Sciatic nerve (tissue), 2 donors: ENCODE measurements at regions of chr7 and their contacts with region 1.

Region 1: DNA sequence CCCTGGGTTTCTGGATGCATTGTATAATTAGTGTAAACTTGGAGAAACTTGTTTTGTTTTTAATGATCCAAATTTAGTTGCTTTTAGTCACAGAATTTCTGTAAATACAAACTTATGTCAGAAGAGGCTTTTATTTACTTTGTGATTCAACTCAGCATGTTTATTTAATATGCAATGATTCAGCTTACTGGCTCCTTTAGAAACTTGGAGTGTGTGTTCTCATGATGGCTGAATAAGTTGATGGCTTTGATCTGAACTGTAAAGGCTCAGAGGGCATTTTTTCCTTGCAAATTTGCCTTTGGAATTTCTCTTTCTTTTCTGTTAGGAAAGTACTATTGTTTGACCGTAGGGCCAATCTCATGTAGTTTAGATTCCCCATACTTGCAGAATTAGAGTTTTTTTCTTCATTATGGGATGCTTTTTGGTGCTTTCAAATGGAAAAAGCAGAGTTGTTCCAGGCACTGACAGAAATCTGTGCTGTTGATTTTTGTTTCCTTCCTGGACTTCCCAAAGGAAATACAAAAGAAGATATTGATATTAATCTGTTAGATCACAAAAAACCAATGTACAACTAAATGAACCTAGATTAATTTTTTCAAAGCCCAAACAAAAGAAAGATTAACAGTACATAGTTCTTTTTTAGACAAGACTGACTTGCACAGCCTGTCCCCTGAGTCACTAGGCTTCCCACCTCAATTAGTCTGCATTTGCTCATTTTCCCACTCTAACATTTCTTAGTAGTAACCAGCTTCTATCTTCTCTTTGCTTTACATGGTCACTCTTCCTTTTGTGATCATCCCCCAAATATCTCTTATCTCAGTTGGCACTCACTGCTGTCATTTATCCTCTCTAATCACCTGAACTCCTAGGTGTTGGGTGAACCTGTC is 96.8 kb upstream of the AGR3 start:
- DNase-seq: no peak
- ATAC-seq: no peak

Region 2: DNA sequence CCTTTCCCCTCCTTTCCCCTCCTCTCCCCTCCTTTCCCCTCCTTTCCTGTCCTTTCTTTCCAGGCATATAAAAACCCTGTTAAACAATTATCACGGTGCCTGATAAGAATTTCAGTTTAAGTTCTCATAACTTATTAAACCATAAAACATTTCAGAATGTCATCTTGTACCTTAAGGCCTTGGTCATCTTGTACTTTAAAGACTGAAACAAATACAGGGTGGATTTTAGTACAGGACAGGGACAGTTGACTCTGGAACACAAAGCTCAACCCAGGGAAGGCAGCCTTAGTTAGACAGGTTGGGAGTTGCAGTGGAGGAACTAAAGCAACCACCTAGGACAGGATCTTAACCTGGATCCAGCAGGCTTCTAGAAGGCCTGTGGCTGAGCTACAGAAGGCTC is 98.0 kb before region 1 on chr7:
- intact Hi-C with region 1: no loop called
- DNase-seq: no peak
- ATAC-seq: no peak

Region 3: DNA sequence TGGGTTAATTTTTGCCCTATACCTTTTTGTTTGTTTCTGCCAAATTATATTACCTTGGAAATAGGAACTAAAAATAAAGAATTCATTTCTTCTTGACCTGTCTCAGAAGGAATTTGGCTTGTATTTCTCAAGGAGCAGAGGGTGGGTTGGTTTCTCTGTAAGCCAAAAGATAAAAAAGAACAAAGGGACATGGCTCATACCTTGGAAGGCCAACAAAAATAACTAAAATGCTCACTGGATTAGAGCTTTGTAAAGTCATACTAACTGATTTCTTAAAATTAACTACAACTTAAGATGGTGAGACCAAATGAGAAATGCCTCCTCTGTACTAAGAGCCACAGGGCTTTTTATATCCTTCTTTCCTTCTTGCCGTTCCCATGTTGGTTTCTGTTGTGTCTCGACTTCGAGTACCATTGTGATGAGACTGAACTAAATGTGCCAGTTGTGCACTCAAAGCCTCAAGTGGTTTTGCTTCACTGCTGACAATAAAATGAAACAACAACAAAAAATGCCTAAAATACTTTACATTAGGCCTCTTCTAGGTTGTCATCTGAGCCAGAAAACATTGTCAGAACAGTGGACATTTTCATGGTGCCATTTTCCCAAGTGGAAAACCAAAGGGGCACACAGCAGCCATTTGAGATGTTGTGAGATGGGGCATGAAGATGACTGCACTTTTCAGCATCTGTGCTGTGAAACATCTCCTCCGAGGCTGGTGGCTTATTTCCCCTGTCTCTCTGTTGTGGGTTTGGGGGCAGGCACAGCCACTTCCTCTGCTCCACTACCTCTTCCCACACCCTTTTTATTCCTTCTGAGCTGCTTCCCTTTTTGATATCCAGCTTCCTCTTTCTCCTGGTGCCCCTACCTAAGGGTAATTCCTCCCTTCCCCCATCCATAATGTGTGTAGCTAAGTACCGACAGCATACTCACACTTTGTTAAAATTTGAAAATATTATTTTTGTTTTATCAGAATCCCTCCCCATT is 45.0 kb before region 1 on chr7:
- intact Hi-C with region 1: loop called (anchors 1 kb)
- DNase-seq: no peak
- ATAC-seq: peak; percentile 53

Region 4: GRCh38 chr7:16999541-17000267 is 21.1 kb after region 1 on chr7:
- intact Hi-C with region 1: no loop called
- DNase-seq: no peak
- ATAC-seq: no peak

Region 5: DNA sequence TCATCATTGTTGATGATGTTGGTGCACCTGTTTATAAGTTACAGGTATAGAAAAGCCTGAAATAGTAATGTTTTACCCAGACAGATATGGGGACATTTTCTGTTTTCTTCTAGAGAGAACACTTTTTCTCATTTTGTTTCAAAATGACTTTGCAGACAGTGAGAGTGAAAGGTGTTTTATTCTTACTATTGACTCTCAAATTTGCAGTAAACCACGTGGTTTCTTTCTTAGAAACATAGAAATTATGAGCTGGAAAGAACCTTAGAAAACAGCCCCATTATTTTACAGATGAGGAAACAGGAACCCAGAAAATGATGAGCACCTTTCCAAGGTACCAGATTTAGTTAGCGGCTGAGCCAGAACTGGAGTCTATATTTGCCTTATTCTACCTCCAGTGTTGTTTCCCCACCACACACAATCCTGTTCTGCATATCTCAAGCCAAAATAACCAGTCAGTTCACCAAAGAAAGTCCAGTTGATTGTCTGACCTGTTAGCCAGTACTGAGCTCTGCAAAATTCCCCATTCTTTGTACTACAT is 181.0 kb after region 1 on chr7:
- intact Hi-C with region 1: no loop called
- DNase-seq: no peak
- ATAC-seq: no peak